ENCODE measurements at regions of chr5 and their contacts with region 1.

Region 1: DNA sequence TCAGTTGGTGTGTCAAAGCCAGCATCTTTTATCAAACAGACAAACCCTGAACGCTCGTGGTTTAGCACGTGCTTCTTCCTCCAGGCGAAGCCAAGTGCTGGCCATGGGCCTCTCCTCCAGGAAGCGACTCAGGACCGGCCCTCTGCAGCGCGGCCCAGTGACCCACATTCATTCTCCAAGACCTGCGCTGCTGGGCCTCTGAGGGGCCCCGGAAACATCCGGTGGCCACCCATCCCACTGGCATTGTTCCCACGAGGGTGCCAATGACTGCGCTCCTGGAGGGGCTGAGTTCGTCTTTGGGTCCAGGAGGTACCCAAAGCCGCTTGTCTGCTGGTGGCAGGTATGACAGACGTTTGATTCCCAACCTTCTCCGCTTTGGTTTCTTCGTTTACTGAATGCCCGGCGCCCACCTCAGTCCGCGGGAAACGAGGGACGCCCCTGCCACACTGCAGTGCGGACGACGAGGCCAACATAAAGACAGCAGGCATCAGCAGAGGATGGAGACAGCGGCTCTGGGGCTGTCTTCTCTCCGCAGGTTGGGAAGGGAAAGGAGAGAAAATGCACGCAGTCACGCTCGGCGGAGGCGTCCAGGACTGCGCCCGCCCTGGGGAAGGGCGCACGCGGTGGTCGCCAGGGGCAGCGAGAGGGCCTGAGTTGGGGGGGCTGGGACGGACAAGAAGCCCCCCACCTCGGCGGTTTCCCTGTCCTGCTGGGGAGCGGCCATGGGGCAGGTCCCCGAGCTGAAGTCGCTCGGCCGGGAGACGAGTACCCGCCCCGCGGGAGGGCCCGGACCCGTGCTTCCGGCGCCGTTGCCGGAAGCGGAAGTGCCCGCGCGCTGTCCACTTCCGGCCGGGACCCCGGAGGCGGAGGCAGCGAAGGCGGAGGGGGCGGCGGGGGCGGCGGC is at the start of gene EXOC3:
- DNase-seq: peak; percentile 64
- H3K4me3 Mint-ChIP-seq: peak within 1 kb of the TSS; percentile 91
- H3K27ac Mint-ChIP-seq: peak within 1 kb of the TSS; percentile 80
- H3K4me1 Mint-ChIP-seq: peaks cover 15% of the 10 kb centered on the region
- H3K27me3 Mint-ChIP-seq: no peaks in the 10 kb centered on the region
- CTCF ChIP-seq: no peak
- total RNA-seq, gene EXOC3: 44.1 and 49.6 TPM in 2 replicates

Region 2: GRCh38 chr5:317086-317811 is 125.3 kb before region 1 on chr5:
- CTCF ChIA-PET with region 1: interaction called, 94 read pairs
- POLR2A ChIA-PET with region 1: interaction called, 4 read pairs
- intact Hi-C with region 1: no loop called
- DNase-seq: peak; percentile 75
- H3K4me3 Mint-ChIP-seq: no peak overlapping the region
- H3K27ac Mint-ChIP-seq: no peak overlapping the region
- H3K4me1 Mint-ChIP-seq: no peaks in the 10 kb centered on the region
- H3K27me3 Mint-ChIP-seq: no peaks in the 10 kb centered on the region
- CTCF ChIP-seq: peak; percentile 66

Region 3: GRCh38 chr5:431001-431710 is 11.4 kb before region 1 on chr5:
- CTCF ChIA-PET with region 1: interaction called, 10 read pairs
- POLR2A ChIA-PET with region 1: interaction called, 5 read pairs
- intact Hi-C with region 1: no loop called
- DNase-seq: peak; percentile 61
- H3K4me3 Mint-ChIP-seq: no peak overlapping the region
- H3K27ac Mint-ChIP-seq: no peak overlapping the region
- H3K4me1 Mint-ChIP-seq: peaks cover 9% of the 10 kb centered on the region
- H3K27me3 Mint-ChIP-seq: no peaks in the 10 kb centered on the region
- CTCF ChIP-seq: peak; percentile 71

Region 4: DNA sequence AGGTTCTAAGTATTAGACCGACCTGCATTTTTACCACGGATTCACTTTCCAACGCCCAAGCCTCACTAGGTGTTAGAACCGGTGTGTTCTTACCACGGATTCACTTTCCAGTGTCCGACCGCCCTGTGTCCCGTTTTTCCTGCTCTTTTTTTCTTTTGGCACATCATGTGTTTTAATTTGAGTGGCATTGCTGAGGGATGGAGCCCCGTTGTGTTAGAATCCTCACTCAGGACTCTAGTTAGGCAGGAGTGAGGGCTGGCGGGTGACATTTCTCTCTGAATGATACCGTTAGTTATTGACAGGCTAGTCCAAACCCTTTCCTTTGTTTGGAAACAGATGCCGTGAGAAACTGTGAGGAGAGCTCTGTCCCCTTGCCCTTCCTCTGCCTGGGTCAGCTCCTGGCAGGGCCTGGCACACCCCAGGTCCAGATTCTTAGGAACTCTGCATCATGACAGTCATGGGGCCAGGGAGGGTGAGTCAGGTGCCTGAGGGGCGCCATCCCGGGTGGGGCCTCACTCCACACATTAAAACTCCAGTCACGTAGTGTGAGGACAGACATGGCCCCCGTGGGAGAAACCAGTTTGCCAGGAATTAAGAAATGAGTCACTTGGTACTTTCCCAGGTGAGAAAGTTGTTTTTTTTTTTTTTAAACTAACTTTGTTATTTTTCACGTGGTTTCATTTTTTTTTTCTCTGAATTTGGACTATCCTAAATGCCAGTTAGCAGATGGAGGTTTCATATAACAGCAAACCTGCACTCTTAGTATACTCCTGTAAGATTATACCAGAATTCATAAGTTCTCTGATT is 16.2 kb after region 1 on chr5:
- CTCF ChIA-PET with region 1: interaction called, 12 read pairs
- POLR2A ChIA-PET with region 1: interaction called, 3 read pairs
- intact Hi-C with region 1: no loop called
- DNase-seq: peak; percentile 78
- H3K4me3 Mint-ChIP-seq: peak overlapping the region; percentile 11
- H3K27ac Mint-ChIP-seq: peak overlapping the region; percentile 65
- H3K4me1 Mint-ChIP-seq: peaks cover 26% of the 10 kb centered on the region
- H3K27me3 Mint-ChIP-seq: no peaks in the 10 kb centered on the region
- CTCF ChIP-seq: no peak

Region 5: GRCh38 chr5:535846-536698 is 93.5 kb after region 1 on chr5:
- CTCF ChIA-PET with region 1: no interaction called
- POLR2A ChIA-PET with region 1: no interaction called
- intact Hi-C with region 1: no loop called
- DNase-seq: no peak
- H3K4me3 Mint-ChIP-seq: no peak overlapping the region
- H3K27ac Mint-ChIP-seq: no peak overlapping the region
- H3K4me1 Mint-ChIP-seq: no peaks in the 10 kb centered on the region
- H3K27me3 Mint-ChIP-seq: peaks cover 37% of the 10 kb centered on the region
- CTCF ChIP-seq: no peak

Region 6: GRCh38 chr5:902129-902916 is 459.7 kb after region 1 on chr5:
- CTCF ChIA-PET with region 1: interaction called, 8 read pairs
- POLR2A ChIA-PET with region 1: no interaction called
- intact Hi-C with region 1: loop called (anchors 10 kb)
- DNase-seq: no peak
- H3K4me3 Mint-ChIP-seq: no peak overlapping the region
- H3K27ac Mint-ChIP-seq: peak overlapping the region; percentile 8
- H3K4me1 Mint-ChIP-seq: no peaks in the 10 kb centered on the region
- H3K27me3 Mint-ChIP-seq: no peaks in the 10 kb centered on the region
- CTCF ChIP-seq: no peak